ENCODE measurements at regions of chr4 and their contacts with region 1.

Region 1: DNA sequence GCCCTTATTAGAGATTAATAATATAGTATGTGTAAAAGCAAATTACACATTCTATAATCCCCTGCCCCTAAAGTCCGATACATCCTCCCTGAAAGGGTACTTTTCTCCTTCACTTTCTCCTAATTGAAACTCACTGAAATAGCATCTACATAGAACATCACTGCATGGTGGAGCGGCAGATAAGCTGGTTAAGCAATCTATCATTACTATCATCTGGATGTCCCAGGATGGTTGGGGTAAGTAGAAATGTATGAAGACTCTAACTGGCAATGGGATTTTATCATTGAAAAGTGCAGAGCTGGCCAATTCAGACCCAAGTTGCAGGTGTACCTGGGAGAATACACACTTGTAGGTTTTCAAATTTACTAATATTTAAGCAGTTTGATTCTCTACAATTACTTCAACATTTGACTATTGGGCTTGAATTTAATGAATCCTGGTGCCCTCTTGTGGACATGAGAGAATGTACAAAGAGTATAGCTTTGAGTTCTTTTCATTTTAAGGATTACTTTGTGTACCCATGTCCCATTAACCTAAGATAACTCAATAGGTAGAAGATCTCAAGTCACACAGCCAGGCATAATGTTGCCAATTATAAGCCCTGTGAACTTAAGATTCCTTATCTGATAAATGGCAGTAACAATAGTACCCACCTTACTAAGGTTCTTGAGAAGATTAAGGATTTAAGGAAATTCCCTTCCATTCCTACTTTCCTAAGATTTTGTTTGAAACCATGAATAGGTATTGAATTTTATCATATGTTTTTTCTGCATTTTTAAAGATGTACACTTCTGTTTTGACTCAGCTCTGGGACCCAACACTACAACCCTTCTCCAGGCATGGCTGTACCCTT is 69.8 kb downstream of the SHROOM3 start:
- H3K4me3 ChIP-seq: no peak overlapping the region
- H3K27ac ChIP-seq: no peak overlapping the region
- H3K4me1 ChIP-seq: no peaks in the 10 kb centered on the region
- CTCF ChIP-seq: no peak

Region 2: DNA sequence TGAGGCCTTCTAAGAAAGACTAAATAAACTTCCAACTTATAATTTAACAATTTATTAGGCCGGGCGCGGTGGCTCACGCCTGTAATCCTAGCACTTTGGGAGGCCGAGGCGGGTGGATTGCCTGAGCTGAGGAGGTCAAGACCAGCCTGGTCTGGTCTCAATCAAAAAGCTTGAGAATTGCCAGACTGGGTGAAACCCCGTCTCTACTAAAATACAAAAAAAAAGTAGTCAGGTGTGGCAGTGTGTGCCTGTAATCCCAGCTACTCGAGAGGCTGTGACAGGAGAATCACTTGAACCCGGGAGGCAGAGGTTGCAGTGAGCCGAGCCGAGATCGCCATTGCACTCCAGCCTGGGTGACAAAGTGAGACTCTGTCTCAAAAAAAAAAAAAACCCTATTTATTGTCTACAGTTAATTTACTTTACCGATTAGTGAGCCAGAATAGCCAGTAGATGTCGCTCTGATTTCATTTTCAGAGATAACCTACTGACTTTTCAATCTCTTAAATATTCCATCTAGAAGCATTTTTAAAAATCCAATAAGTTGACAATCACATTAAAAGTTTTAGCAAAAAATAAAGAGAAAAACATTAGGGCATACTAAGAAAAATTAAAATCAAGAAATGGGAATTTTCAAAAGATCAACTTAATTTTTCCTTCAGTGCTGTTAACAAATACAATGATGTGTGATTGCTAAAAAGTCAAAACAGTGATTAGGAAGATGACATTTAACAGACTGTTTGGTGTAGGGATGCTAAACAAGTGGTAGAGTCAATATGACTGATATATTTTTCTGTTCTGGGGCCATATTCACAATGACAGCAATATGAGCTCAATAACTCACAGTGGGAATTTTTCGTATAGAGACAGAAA is 74.1 kb before region 1 on chr4:
- CTCF ChIA-PET with region 1: interaction called, 133 read pairs
- POLR2A ChIA-PET with region 1: no interaction called
- H3K4me3 ChIP-seq: no peak overlapping the region
- H3K27ac ChIP-seq: no peak overlapping the region
- H3K4me1 ChIP-seq: no peaks in the 10 kb centered on the region
- CTCF ChIP-seq: 0 out of 2 replicates have a peak, but pooled peaks have one; percentile 45

Region 3: DNA sequence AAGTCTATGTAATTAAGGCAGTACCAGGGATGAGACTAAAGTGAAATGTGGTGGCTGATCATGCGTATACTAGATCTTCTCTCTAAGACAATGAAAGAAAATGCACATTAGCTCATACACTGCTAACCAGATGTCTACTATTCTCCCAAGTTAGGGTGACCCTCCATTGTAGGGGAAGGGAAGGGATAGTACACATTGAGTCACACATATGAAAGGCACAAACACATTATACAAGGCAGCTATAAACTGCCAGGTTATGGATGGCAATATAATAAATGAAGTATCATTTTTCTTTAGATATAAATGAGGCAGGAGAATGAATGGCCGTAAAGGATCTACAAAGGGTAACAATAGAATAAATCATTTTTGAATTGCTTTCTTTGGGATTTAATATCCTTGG is 65.3 kb before region 1 on chr4:
- CTCF ChIA-PET with region 1: interaction called, 12 read pairs
- POLR2A ChIA-PET with region 1: no interaction called
- H3K4me3 ChIP-seq: no peak overlapping the region
- H3K27ac ChIP-seq: no peak overlapping the region
- H3K4me1 ChIP-seq: no peaks in the 10 kb centered on the region
- CTCF ChIP-seq: no peak

Region 4: GRCh38 chr4:76515975-76516843 is 11.4 kb after region 1 on chr4:
- CTCF ChIA-PET with region 1: interaction called, 11 read pairs
- POLR2A ChIA-PET with region 1: no interaction called
- H3K4me3 ChIP-seq: no peak overlapping the region
- H3K27ac ChIP-seq: no peak overlapping the region
- H3K4me1 ChIP-seq: peaks cover 4% of the 10 kb centered on the region
- CTCF ChIP-seq: no peak

Measured in HEK293 (cell line).